RWPE1 (cell line): ENCODE measurements at regions of chr5 and their contacts with region 1.

Region 1: GRCh38 chr5:15013654-15014463 is 142.3 kb upstream of the ANKH start:
- DNase-seq: peak; percentile 58
- H3K27ac ChIP-seq: no peak overlapping the region
- CTCF ChIP-seq: peak; percentile 85

Region 2: GRCh38 chr5:14685757-14686156 is 328.1 kb before region 1 on chr5:
- CTCF ChIA-PET with region 1: interaction called, 10 read pairs
- POLR2A ChIA-PET with region 1: no interaction called
- DNase-seq: peak; percentile 67
- H3K27ac ChIP-seq: peak overlapping the region; percentile 31; the same call in 1 of the 2 replicates
- CTCF ChIP-seq: peak; percentile 85

Region 3: GRCh38 chr5:14996997-14997396 is 16.9 kb before region 1 on chr5:
- CTCF ChIA-PET with region 1: no interaction called
- POLR2A ChIA-PET with region 1: no interaction called
- DNase-seq: no peak
- H3K27ac ChIP-seq: no peak overlapping the region
- CTCF ChIP-seq: no peak

Region 4: DNA sequence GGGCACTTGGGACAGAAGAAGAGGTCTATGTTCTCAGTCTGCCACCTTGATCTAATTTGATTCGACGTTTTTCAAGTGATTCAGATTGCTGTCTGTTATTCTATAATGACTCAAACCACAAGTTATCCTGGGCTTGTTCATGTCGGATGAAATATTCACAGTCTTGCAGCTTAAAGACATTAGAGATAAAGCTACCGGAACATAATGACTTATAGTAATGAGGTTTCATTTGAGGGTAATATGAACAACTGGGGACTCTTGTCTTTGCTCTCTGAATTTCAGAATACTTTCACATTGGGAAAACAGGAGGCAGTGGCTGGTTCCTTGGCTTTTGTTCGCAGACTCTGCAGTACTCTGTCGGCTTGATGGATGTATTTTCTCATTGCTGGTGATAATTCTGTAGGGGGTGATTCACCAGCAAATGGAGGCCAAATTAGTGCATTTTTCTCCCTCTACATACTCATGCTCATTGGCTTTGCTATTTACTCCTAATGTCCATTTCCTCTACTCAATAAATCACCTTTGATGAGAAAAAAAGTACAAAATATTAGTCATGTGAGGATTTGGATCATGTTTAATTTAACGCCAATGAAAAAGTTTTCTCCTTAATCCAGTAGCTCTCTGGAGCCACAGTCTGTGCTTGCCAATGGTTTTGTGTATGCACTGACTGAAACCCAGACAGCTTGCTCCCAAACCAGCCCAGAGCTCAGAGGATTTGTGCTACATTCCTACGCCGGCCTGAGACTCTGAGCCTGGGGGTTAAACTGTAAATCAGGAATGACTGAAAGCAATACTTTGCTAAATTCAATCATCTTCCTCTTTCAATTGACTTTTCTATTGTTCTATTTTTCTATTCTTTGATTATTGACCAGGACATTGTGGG is 12.4 kb after region 1 on chr5:
- CTCF ChIA-PET with region 1: no interaction called
- POLR2A ChIA-PET with region 1: no interaction called
- DNase-seq: no peak
- H3K27ac ChIP-seq: no peak overlapping the region
- CTCF ChIP-seq: no peak